Heart right ventricle (tissue), 16 donors: ENCODE measurements at regions of chr19 and their contacts with region 1.

Region 1: GRCh38 chr19:35995048-35995993 is at the start of gene SDHAF1:
- DNase-seq: peak; percentile 97 to 98
- ATAC-seq: peak; percentile 95 to 97 (median 97)
- H3K4me3 ChIP-seq: peak within 1 kb of the TSS; percentile 75 to 99 (median 88)
- H3K27ac ChIP-seq: peak within 1 kb of the TSS in 9 of 10 donors; percentile 78 to 95 (median 88)
- H3K4me1 ChIP-seq: peaks cover 10 to 45% (median 26%) of the 10 kb centered on the region in 9 donors
- H3K27me3 ChIP-seq: no peaks in the 10 kb centered on the region
- CTCF ChIP-seq: no peak
- total RNA-seq, gene SDHAF1: 7.3 to 13.4 (median 10.2) TPM

Region 2: GRCh38 chr19:36014029-36014924 is 19.0 kb after region 1 on chr19 and contains the start of gene ALKBH6:
- intact Hi-C with region 1: loop called in 2 of 10 experiments (anchors 1 kb)
- DNase-seq: peak; percentile 99 to 100
- ATAC-seq: peak; percentile 98 to 100 (median 99)
- H3K4me3 ChIP-seq: peak within 1 kb of the TSS; percentile 34 to 92 (median 74)
- H3K27ac ChIP-seq: peak within 1 kb of the TSS in 9 of 10 donors; percentile 35 to 94 (median 82)
- H3K4me1 ChIP-seq: peaks cover 6 to 22% (median 12%) of the 10 kb centered on the region in 9 donors
- H3K27me3 ChIP-seq: no peaks in the 10 kb centered on the region
- CTCF ChIP-seq: peak in 2 of 9 donors; percentile 19 to 23
- total RNA-seq, gene ALKBH6: 7.9 to 12.4 (median 10.2) TPM

Region 3: GRCh38 chr19:36114763-36115452 is 119.6 kb after region 1 on chr19 and contains the start of gene POLR2I:
- intact Hi-C with region 1: loop called in 1 of 10 experiments (anchors 10 kb)
- DNase-seq: peak; percentile 98 to 100
- ATAC-seq: peak; percentile 93 to 98 (median 96)
- H3K4me3 ChIP-seq: peak within 1 kb of the TSS; percentile 71 to 90 (median 78)
- H3K27ac ChIP-seq: peak within 1 kb of the TSS; percentile 41 to 93 (median 89)
- H3K4me1 ChIP-seq: peaks cover 7 to 30% (median 24%) of the 10 kb centered on the region in 9 donors
- H3K27me3 ChIP-seq: no peaks in the 10 kb centered on the region
- CTCF ChIP-seq: no peak
- total RNA-seq, gene POLR2I: 83.7 to 139 (median 105) TPM